ENCODE measurements at regions of chr19 and their contacts with region 1.

Region 1: DNA sequence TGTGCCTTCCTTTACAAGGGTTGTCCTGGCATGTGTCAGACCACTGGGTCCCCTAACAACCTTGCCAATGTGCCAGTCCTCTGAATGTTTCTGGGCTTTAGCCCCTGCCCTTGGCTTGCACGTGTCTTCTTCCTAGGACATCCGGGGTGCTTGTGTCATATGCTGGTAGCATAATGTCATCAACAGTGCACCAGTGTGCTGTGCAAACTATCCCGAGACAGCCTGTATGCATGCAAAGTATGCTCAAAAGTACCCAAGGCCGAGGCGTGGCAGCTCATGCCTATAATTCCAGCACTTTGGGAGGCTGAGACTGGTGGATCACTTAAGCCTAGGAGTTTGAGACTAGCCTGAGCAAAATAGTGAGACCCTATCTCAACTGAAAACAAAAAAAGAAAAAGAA is 20.7 kb upstream of the C19orf12 start:
- DNase-seq: no peak
- H3K4me3 Mint-ChIP-seq: no peak overlapping the region
- H3K27ac Mint-ChIP-seq: no peak overlapping the region
- H3K4me1 Mint-ChIP-seq: no peaks in the 10 kb centered on the region
- H3K27me3 Mint-ChIP-seq: peaks cover 14% of the 10 kb centered on the region

Region 2: DNA sequence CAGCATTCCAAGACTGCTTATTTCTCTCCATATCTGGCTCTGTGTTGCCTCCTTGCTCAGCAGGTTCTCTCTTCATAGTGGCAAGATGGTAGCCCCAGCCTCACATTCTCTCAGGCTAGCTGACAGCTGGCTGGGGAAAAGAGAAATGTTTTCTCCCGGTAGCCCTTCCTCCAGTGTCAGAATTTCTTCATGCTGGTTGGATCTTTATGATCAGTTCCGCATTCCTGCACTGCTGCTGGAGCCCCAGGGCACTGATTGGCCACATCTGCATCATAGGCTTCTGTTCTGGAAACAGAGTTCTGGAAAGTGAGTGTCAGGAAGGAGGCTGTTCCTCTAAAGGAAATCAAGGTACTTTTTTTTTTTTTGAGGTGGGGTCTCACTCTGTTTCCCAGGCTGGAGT is 105.1 kb before region 1 on chr19:
- intact Hi-C with region 1: no loop called
- DNase-seq: no peak
- H3K4me3 Mint-ChIP-seq: no peak overlapping the region
- H3K27ac Mint-ChIP-seq: no peak overlapping the region
- H3K4me1 Mint-ChIP-seq: no peaks in the 10 kb centered on the region
- H3K27me3 Mint-ChIP-seq: peaks cover 3% of the 10 kb centered on the region

Region 3: GRCh38 chr19:29771708-29772414 is 36.1 kb after region 1 on chr19:
- intact Hi-C with region 1: loop called (anchors 5 kb)
- DNase-seq: no peak
- H3K4me3 Mint-ChIP-seq: no peak overlapping the region
- H3K27ac Mint-ChIP-seq: no peak overlapping the region
- H3K4me1 Mint-ChIP-seq: peaks cover 13% of the 10 kb centered on the region
- H3K27me3 Mint-ChIP-seq: peaks cover 2% of the 10 kb centered on the region

Region 4: GRCh38 chr19:29873024-29873800 is 137.4 kb after region 1 on chr19:
- intact Hi-C with region 1: loop called (anchors 1 kb)
- DNase-seq: peak; percentile 61
- H3K4me3 Mint-ChIP-seq: peak overlapping the region; percentile 61
- H3K27ac Mint-ChIP-seq: no peak overlapping the region
- H3K4me1 Mint-ChIP-seq: peaks cover 11% of the 10 kb centered on the region
- H3K27me3 Mint-ChIP-seq: peaks cover 8% of the 10 kb centered on the region

Region 5: GRCh38 chr19:29953352-29954247 is 217.8 kb after region 1 on chr19:
- intact Hi-C with region 1: no loop called
- DNase-seq: no peak
- H3K4me3 Mint-ChIP-seq: no peak overlapping the region
- H3K27ac Mint-ChIP-seq: peak overlapping the region; percentile 15
- H3K4me1 Mint-ChIP-seq: peaks cover 29% of the 10 kb centered on the region
- H3K27me3 Mint-ChIP-seq: no peaks in the 10 kb centered on the region

Region 6: DNA sequence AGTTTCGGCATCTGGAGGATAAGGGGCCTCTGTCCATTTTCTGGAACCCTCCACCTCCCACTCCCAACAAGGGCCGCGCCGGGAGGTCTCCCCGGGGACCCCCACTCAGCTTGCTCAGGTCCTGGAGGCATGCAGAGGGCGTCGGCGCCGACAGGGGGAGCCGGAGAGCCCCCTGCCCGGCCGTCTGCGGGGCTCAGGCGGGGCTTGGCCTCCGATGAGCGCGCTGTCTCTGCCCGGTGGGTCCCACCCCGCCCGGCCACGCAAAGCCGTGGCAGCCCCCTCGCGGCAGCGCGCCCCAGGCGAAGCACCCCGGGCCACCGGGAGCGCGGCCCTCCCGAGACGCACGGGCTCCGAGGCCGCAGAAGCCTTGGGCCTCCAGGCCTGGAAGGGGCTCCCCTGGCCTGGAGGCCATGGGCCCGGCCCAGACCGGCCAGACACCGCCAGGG is 486.7 kb after region 1 on chr19:
- intact Hi-C with region 1: loop called (anchors 5 kb)
- DNase-seq: no peak
- H3K4me3 Mint-ChIP-seq: no peak overlapping the region
- H3K27ac Mint-ChIP-seq: no peak overlapping the region
- H3K4me1 Mint-ChIP-seq: peaks cover 20% of the 10 kb centered on the region
- H3K27me3 Mint-ChIP-seq: peaks cover 53% of the 10 kb centered on the region

Region 7: DNA sequence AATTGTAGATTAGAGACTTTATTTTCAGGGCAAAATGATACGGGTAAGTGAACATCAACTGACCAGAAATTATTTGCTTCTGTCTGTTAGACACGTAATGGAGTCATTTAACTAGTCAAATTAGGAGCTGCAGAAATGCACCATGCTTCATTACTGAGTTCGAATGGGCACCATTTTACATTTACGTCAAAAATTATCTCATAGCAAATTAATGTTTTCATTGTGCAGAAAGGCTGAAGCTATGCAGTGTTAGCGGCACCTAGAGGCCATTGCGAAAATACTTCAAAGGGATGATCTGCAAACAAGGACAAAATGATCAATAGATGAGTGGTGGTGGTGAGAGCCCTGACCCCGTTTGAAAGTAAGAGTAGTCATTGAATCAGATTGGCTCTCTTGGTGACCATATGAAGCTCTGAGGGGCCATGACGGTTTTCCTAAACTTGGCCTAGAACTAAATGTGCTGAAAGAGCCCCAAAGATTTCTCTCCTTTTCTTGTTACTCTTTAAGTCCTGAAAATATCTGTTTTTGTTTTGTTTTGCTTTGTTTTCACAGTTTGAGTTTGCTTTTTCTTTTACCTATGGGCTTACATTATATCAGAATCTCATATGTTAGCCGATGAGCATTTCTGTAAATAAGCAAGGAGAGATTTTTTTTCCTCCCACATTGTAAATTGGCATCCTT is 914.3 kb after region 1 on chr19:
- intact Hi-C with region 1: loop called (anchors 1 kb)
- DNase-seq: peak; percentile 8
- H3K4me3 Mint-ChIP-seq: no peak overlapping the region
- H3K27ac Mint-ChIP-seq: no peak overlapping the region
- H3K4me1 Mint-ChIP-seq: no peaks in the 10 kb centered on the region
- H3K27me3 Mint-ChIP-seq: peaks cover 4% of the 10 kb centered on the region

Region 8: DNA sequence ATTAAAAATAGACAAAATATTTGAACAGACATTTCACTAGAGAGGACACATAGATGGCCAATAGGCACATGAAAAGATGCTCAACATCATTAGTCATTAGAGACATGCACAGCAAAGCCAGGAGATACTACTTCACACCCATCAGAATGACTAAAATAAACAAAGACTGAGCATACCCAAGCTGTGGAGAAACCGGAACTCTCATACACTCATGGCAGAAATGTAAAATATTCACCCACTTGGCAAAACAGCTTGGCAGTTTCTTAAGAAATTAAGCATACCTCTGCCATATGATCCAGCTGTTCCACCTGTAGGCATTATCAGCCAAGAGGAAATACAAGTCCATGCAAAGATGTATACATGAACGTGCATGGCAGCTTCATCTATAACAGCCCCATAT is 1400.0 kb after region 1 on chr19:
- intact Hi-C with region 1: no loop called
- DNase-seq: no peak
- H3K4me3 Mint-ChIP-seq: no peak overlapping the region
- H3K27ac Mint-ChIP-seq: no peak overlapping the region
- H3K4me1 Mint-ChIP-seq: no peaks in the 10 kb centered on the region
- H3K27me3 Mint-ChIP-seq: peaks cover 4% of the 10 kb centered on the region